ENCODE measurements at regions of chr5 and their contacts with region 1.

Region 1: DNA sequence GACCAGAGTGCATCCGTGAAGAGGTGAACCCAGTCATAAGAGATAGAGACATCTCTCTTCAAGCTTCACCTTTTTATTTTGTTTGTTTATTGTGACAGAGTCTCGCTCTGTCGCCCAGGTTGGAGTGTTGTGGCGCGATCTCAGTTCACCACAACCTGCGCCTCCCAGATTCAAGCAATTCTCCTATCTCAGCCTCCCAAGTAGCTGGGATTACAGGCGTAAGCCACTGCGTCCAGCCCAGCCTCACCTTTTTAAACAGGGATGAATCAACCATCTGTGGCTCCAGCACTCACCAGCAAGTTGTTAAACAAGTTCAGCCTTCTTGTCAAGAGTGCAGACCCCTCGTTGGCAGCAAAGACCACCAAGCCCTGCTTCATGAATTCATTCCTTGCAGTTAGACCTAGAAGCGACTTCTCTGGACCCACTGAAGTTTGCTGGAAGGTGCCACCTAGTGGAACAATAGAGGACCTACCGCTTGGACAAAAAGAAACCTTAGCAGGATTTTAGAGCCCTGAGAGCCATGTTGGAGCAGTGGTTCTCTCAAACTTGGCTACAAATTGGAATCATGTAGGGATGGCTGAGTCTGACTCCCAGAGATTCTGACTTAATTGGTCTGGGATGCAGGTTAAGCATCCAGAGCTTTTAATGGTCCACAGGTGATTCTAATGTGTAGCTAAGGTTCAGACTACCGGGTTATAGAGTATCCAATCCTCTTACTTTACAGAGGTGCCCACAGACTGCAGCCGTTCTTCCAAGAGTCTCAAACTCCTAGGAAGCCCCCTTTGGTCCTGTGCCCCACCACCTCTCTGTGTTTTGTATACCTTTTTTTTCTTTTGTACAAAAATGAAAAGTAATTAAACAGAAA is 10.5 kb upstream of the GALNT10 start:
- DNase-seq: no peak
- ATAC-seq: peak; percentile 89

Region 2: GRCh38 chr5:153938191-153938842 is 241.8 kb before region 1 on chr5:
- intact Hi-C with region 1: no loop called
- DNase-seq: no peak
- ATAC-seq: no peak

Region 3: GRCh38 chr5:153974131-153974812 is 205.8 kb before region 1 on chr5:
- intact Hi-C with region 1: loop called (anchors 5 kb)
- DNase-seq: no peak
- ATAC-seq: peak; percentile 45

Region 4: GRCh38 chr5:154072414-154073171 is 107.5 kb before region 1 on chr5:
- intact Hi-C with region 1: loop called (anchors 5 kb)
- DNase-seq: peak; percentile 88
- ATAC-seq: peak; percentile 90

Region 5: DNA sequence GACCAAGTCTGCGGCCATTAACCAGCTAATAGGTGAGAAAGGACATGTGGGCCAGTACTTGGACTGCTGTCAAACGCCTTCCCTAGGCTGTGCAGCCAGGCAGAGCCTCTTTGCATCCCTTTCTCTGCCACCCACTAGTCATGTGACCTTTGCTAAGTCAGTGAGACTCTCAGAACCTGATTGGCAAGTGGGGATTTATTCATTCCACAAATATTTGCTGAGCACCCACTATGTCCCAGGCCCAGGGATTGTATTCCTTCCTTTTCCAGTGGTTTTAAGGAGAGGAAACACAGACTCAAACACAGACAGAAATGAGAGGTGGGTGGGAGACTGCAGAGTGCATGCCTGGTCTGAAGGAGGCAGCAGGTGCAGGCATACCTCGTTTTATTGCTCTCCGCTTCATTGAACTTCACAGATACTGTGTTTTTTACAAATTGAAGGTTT is 61.2 kb before region 1 on chr5:
- intact Hi-C with region 1: no loop called
- DNase-seq: no peak
- ATAC-seq: peak; percentile 57

Region 6: DNA sequence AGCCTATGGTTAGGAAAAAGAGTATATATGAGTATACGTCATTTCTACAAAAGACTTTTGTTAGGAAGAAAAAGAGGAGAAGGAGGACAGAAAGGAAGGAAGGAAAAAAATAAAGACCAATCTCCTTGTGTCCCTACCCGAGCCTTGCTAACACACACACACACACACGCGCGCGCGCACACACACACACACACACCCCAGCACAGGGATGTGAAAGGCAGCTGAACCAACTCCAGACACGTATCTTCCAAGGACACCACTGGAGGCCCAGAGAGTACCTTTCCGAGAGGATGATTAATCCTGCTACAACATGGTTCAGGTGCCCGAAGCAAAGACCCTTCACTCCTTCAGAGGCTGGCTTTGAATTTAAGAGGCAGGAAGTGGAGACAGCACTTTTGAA is 46.5 kb before region 1 on chr5:
- intact Hi-C with region 1: no loop called
- DNase-seq: no peak
- ATAC-seq: no peak

Measured in left ventricle myocardium superior (tissue), 1 donor.